HepG2 (cell line): ENCODE measurements at regions of chr6 and their contacts with region 1.

Region 1: DNA sequence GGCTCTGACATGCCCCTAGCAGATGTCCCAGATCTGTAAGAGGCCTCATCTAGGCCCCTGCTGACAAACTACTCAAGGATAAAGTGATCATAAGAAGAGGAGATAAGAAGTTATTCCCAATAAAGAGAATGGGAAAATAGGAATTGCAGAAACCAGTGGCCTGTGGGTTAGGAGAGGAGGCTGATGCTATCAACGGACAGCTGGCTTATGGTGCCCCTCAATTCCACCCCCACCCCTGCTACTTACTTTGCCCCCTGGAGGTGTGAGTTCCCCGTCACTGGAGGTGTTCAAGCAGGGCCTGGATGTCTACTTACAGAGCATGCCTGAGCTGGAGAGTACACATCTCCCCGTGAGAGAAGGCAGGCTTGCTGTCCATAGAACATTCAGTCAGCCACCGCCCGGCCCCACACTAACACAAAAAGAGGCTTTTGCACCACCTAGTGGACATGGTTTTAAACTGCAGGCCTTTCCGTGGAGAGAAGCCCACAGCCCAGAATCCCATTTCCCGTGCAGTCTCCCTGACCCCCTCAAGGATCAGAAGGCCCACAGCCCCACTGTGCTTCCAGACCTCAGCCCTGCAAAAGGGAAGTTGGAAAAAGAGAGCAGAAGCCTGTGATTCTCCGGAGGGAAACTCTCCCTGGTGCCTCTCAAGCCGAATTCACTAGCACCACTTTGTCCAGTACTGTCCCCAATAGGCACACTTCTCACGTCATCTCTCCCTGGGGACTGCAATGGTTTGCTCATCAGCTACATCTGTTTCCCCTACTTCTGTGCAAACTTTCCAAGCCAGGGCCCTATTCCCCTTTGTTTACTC is 23.8 kb upstream of the BNIP5 start:
- DNase-seq: peak; percentile 82
- ATAC-seq: peak; percentile 92
- H3K4me3 ChIP-seq: no peak overlapping the region
- H3K27ac ChIP-seq: no peak overlapping the region
- H3K4me1 ChIP-seq: peaks cover 23% of the 10 kb centered on the region
- H3K27me3 ChIP-seq: 0 out of 5 replicates have a peak, but pooled peaks cover 0 to 2% of the 10 kb centered on the region in 2 experiments
- CTCF ChIP-seq: peak; percentile 97
- EP300 ChIP-seq: no peak
- POLR2A ChIP-seq: no peak
- RAD21 ChIP-seq: peak; percentile 94

Region 2: DNA sequence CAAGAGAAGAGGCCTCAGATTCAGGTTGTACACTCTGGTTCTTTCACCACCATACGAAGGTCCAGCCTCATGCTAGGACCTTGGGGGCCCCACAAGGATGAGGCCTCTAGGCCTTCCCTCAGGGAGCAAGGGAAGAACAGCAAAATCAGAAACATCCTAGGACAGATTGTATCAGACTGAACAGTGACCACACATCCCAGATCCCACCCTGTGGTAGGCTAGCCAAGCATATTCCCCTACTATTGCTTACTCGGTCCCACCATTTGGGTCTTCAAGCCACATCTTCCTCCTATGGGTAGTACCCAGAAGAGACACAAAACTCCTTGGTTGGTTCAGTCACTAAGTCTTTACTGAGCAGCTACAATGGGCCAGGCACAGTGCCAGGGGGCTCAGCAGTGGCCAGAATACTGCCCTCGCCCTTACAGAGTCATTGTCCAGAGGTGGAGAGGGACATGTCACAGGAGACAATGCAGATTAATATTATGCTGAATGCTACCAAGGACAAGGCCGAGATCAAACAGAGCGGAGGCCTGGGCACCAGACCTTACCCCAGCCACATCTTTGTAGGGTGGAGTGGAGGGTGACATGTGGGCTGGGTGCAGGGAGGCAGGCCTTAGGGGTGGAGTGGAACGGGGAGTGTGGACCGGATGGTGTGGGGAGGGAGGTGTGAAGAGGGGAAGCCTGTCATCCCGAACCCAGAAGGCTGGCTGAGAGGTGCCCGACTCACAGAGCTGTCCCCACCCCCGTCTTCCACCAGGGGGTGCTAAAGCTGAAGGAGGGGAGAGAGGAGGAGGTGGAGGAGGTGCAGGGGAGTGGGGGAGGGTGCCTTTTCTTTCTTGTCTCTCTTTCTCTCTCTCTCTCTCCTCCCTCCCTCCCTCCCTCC is 236.9 kb before region 1 on chr6:
- CTCF ChIA-PET with region 1: interaction called, 4 read pairs
- POLR2A ChIA-PET with region 1: interaction called, 3 read pairs
- in situ Hi-C with region 1: loop called (anchors 5 kb)
- intact Hi-C with region 1: loop called (anchors 1 kb)
- DNase-seq: peak; percentile 83
- ATAC-seq: peak; percentile 63
- H3K4me3 ChIP-seq: 0 out of 6 replicates have a peak overlapping the region, but pooled peaks of 1 of the 3 experiments have one; percentile 17
- H3K27ac ChIP-seq: no peak overlapping the region
- H3K4me1 ChIP-seq: peaks cover 55% of the 10 kb centered on the region
- H3K27me3 ChIP-seq: no peaks in the 10 kb centered on the region
- CTCF ChIP-seq: peak; percentile 89
- EP300 ChIP-seq: no peak
- POLR2A ChIP-seq: no peak
- RAD21 ChIP-seq: peak; percentile 69

Region 3: DNA sequence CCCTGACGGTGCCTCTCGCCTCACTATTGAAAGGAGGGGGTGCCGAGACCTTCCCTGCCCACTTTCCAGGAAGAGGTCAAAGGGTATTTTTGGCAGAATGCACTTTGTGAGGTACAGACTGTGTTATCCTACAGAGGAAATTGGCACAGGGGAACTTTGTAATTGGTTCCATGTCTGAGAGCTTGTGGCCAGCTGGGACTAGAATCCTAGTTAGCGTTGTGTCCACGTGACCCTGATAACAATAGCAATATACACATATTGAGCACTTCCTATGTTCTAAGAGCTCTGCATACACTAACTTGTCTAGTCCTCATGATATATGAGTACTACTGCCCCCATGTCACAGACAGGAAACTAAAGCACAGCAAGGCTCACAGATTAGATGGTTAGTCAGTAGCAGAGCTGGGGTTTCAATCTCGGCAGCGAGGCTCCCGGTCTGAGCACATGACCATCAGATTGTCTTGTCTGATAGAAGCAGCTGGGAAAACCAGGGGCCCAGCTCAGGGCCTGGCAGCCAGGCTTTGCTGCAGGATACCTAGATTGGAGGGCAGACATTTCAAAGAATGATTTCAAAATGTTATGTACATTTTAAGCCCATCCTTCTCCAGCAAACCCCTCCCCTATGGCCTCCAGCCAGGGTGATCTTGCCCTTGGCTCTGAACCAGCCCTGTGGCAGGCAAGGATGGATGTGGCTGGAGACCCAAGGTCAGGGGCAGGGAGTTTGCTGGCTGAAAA is 228.8 kb before region 1 on chr6:
- CTCF ChIA-PET with region 1: no interaction called
- POLR2A ChIA-PET with region 1: interaction called, 3 read pairs
- in situ Hi-C with region 1: loop called (anchors 5 kb)
- intact Hi-C with region 1: no loop called
- DNase-seq: peak; percentile 84
- ATAC-seq: peak; percentile 22
- H3K4me3 ChIP-seq: peak overlapping the region; percentile 75 to 92 (median 75)
- H3K27ac ChIP-seq: peak overlapping the region; percentile 90
- H3K4me1 ChIP-seq: peaks cover 66% of the 10 kb centered on the region
- H3K27me3 ChIP-seq: no peaks in the 10 kb centered on the region
- CTCF ChIP-seq: no peak
- EP300 ChIP-seq: peak in 1 of 2 experiments; percentile 57; a peak in 1 of 4 replicates
- POLR2A ChIP-seq: no peak; a peak in 1 of 4 replicates
- RAD21 ChIP-seq: no peak

Region 4: DNA sequence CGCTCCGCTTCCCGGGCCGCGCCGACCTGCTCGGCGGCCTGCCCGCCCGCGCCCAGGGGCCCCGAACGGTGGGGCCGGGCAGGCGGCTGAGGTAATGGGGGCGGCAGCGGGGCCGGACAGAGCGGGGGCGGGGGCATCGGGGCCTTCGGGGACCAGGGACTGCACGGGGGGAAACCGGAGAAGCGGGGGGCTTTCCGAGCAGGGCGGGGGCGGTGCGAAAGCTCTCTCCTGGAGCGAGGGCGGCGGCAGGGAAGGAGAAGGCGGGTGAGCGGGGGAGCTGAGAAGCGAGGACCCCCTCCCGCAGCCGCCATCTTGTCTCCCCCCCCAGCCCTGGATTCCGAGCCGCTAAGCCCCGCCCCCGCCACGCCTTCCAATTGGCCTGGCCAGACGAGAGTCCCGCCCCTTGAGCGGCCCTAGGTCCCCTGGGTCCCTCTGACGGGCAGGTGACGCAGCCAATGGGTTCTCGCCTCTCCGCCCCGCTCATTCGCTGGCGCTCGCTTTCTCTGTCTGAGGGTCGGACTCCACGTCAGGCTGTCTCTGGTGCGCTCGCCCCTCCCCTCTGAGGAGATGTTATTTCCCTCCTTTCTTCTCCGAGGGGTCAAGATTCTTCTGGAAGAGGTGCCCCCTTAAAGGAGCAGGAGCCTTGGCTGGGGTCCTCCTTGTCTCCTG is 163.4 kb before region 1 on chr6:
- CTCF ChIA-PET with region 1: no interaction called
- POLR2A ChIA-PET with region 1: no interaction called
- in situ Hi-C with region 1: no loop called
- intact Hi-C with region 1: no loop called
- DNase-seq: peak; percentile 96
- ATAC-seq: peak; percentile 95
- H3K4me3 ChIP-seq: peak overlapping the region; percentile 65 to 90 (median 81)
- H3K27ac ChIP-seq: peak overlapping the region; percentile 92
- H3K4me1 ChIP-seq: peaks cover 22% of the 10 kb centered on the region
- H3K27me3 ChIP-seq: no peaks in the 10 kb centered on the region
- CTCF ChIP-seq: no peak
- EP300 ChIP-seq: no peak
- POLR2A ChIP-seq: peak; percentile 70 to 75
- RAD21 ChIP-seq: no peak

Region 5: GRCh38 chr6:36302227-36302976 is 58.0 kb before region 1 on chr6:
- CTCF ChIA-PET with region 1: interaction called, 100 read pairs
- POLR2A ChIA-PET with region 1: no interaction called
- in situ Hi-C with region 1: loop called (anchors 5 kb)
- intact Hi-C with region 1: loop called (anchors 1 kb)
- DNase-seq: peak; percentile 93
- ATAC-seq: peak; percentile 96
- H3K4me3 ChIP-seq: no peak overlapping the region
- H3K27ac ChIP-seq: no peak overlapping the region
- H3K4me1 ChIP-seq: no peaks in the 10 kb centered on the region
- H3K27me3 ChIP-seq: peaks cover 0 to 10% of the 10 kb centered on the region in 2 experiments; a peak in 2 of 5 replicates
- CTCF ChIP-seq: peak; percentile 96
- EP300 ChIP-seq: no peak
- POLR2A ChIP-seq: no peak
- RAD21 ChIP-seq: peak; percentile 92

Region 6: DNA sequence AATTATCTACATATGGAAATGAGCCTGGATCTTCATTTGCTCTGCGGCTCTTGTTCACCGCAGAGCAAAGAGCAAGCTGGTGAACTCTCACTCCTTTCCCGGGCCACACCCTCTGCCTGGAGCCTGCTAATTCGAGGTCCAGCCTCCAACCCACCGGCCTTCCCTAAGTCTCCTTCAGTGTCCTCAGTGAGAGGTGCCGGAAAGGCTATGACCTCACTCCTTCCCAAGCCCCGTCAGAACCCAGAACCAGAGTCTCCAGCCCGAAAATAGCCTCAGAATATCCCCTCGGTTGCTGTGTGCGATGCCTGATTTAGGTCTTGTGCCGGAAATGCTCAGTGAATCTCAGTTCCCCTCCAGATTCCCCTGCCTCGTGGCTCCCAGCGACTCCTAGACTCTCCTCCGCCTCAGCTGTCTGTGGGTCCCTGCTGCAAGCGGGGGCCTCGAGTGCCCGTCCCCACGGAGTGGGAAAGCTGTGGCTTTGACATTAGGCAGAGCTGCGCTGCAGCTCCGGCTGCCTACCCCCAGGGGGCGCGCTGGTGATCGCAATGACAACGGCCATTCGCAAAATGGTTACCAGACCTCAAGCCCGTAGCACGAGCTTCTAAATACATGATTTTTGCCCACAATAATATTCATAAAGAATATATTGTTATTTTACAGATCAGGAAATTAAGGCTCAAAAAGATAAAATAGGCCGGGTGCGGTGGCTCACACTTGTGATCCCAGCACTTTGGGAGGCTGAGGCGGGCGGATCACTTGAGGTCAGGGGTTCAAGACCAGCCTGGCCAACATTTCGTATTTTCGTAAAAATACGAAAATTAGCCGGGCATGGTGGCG is 19.6 kb before region 1 on chr6:
- CTCF ChIA-PET with region 1: interaction called, 14 read pairs
- POLR2A ChIA-PET with region 1: interaction called, 5 read pairs
- in situ Hi-C with region 1: no loop called
- intact Hi-C with region 1: loop called (anchors 1 kb)
- DNase-seq: peak; percentile 44
- ATAC-seq: peak; percentile 88
- H3K4me3 ChIP-seq: peak overlapping the region; percentile 19 to 69 (median 35); a peak in 5 of 6 replicates
- H3K27ac ChIP-seq: no peak overlapping the region
- H3K4me1 ChIP-seq: peaks cover 27% of the 10 kb centered on the region
- H3K27me3 ChIP-seq: peaks cover 2 to 21% of the 10 kb centered on the region in 2 experiments; a peak in 4 of 5 replicates
- CTCF ChIP-seq: peak; percentile 93
- EP300 ChIP-seq: no peak
- POLR2A ChIP-seq: no peak
- RAD21 ChIP-seq: peak; percentile 65

Region 7: GRCh38 chr6:36392621-36393020 is 32.2 kb after region 1 on chr6:
- CTCF ChIA-PET with region 1: no interaction called
- POLR2A ChIA-PET with region 1: no interaction called
- in situ Hi-C with region 1: no loop called
- intact Hi-C with region 1: loop called (anchors 1 kb)
- DNase-seq: no peak
- ATAC-seq: peak; percentile 60
- H3K4me3 ChIP-seq: no peak overlapping the region
- H3K27ac ChIP-seq: no peak overlapping the region
- H3K4me1 ChIP-seq: peaks cover 8% of the 10 kb centered on the region
- H3K27me3 ChIP-seq: peaks cover 0 to 38% of the 10 kb centered on the region in 2 experiments; a peak in 4 of 5 replicates
- CTCF ChIP-seq: no peak
- EP300 ChIP-seq: no peak
- POLR2A ChIP-seq: no peak
- RAD21 ChIP-seq: no peak